ENCODE measurements at regions of chr1 and their contacts with region 1.

Region 1: DNA sequence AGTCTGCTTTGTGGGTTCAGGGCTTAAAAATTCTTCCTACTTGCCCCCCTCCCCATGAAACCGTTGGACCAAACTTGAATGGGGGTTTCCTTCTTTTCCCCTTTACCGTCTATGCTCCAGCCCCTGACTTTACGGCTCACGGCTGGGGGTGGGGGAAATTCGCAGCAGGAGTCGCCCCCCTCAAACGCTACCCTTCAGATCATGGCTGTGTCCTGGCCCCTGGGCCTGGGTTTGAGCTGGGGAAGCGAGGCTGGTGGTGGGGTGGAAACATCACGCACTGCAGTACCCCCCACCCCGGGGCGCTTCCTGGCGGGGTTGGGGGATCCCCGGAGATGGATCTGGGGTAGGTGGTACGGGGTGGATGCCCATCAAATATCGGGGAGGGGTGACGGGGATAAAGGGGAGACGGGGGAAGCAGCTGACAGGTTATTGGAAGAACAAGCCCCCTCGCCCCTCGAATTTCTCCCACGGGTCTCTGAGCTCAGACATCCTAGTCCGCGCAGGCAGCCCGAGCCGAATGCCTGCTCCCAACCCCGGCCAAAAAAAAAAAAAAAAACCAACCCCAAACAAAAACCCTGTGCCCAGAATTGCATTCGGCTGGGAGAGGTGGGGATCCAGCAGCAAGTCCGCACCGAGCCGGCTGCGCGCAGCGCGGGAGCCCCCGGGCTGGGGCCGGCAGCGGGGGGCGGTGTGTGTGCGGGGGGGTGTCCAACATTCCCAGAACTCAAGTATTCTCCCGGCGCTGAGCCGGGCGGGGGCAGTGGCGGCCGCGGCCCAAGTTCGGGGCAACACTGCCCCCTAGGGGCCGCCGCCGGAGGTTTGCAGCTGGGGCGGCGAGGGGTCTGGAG is 59.0 kb upstream of the ACOT11 start:
- DNase-seq: peak; percentile 38 to 83 (median 64)
- ATAC-seq: peak; percentile 57
- H3K4me3 ChIP-seq: peak overlapping the region; percentile 80
- H3K4me3 Mint-ChIP-seq: peak overlapping the region; percentile 87
- H3K27ac ChIP-seq: peak overlapping the region; percentile 58 to 78
- H3K27ac Mint-ChIP-seq: peak overlapping the region; percentile 62
- H3K4me1 ChIP-seq: peaks cover 52% of the 10 kb centered on the region
- H3K4me1 Mint-ChIP-seq: peaks cover 50% of the 10 kb centered on the region
- H3K27me3 ChIP-seq: no peaks in the 10 kb centered on the region
- H3K27me3 Mint-ChIP-seq: no peaks in the 10 kb centered on the region
- CTCF ChIP-seq: peak; percentile 99

Region 2: GRCh38 chr1:53889304-53890298 is 599.4 kb before region 1 on chr1 and contains the start of gene YIPF1:
- CTCF ChIA-PET with region 1: no interaction called
- POLR2A ChIA-PET with region 1: no interaction called
- intact Hi-C with region 1: loop called in 1 of 2 experiments (anchors 5 kb)
- DNase-seq: peak; percentile 69 to 92 (median 84)
- ATAC-seq: peak; percentile 99
- H3K4me3 ChIP-seq: peak within 1 kb of the TSS; percentile 98
- H3K4me3 Mint-ChIP-seq: peak within 1 kb of the TSS; percentile 94
- H3K27ac ChIP-seq: peak within 1 kb of the TSS; percentile 29 to 45
- H3K27ac Mint-ChIP-seq: peak within 1 kb of the TSS; percentile 93
- H3K4me1 ChIP-seq: peaks cover 18% of the 10 kb centered on the region
- H3K4me1 Mint-ChIP-seq: peaks cover 44% of the 10 kb centered on the region
- H3K27me3 ChIP-seq: no peaks in the 10 kb centered on the region
- H3K27me3 Mint-ChIP-seq: no peaks in the 10 kb centered on the region
- CTCF ChIP-seq: no peak
- total RNA-seq, gene YIPF1: 4.3 to 5.5 TPM

Region 3: DNA sequence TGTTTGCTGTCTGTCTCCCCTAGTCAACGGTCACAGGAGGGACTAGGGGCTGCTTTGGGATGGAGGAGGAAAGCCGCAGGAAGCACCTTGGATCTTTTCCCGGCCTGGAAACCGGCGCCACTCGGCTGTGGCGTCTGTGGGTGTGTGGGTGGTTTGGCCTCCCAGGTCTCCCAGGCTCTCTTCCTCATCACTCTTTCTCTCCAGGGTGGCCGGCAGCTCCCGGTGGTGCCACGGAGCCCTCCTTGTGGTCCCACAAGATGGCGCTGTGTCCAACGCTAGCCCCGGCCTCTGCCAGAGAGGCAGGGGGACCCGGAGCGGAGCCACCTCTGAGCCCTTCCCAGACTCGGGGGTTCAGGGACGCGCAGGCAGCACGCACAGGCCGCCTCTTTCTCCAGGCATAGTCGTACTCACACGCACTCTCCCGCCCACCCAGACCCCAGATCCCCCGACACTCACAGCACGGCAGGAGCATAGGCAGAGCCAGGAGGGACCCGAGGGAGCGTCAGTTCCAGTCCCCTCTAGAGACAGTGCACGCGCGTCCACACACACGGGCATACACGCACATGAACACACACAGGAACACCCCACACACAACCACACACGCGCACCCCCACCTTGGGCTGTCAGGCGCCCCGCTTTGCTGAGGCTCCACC is 367.4 kb before region 1 on chr1:
- CTCF ChIA-PET with region 1: interaction called, 14 read pairs
- POLR2A ChIA-PET with region 1: interaction called, 3 read pairs
- intact Hi-C with region 1: loop called (anchors 1 kb)
- DNase-seq: peak; percentile 51 to 79 (median 60)
- ATAC-seq: peak; percentile 85
- H3K4me3 ChIP-seq: peak overlapping the region; percentile 4
- H3K4me3 Mint-ChIP-seq: no peak overlapping the region
- H3K27ac ChIP-seq: no peak overlapping the region
- H3K27ac Mint-ChIP-seq: no peak overlapping the region
- H3K4me1 ChIP-seq: peaks cover 9% of the 10 kb centered on the region
- H3K4me1 Mint-ChIP-seq: no peaks in the 10 kb centered on the region
- H3K27me3 ChIP-seq: no peaks in the 10 kb centered on the region
- H3K27me3 Mint-ChIP-seq: peaks cover 3% of the 10 kb centered on the region
- CTCF ChIP-seq: peak; percentile 59

Region 4: DNA sequence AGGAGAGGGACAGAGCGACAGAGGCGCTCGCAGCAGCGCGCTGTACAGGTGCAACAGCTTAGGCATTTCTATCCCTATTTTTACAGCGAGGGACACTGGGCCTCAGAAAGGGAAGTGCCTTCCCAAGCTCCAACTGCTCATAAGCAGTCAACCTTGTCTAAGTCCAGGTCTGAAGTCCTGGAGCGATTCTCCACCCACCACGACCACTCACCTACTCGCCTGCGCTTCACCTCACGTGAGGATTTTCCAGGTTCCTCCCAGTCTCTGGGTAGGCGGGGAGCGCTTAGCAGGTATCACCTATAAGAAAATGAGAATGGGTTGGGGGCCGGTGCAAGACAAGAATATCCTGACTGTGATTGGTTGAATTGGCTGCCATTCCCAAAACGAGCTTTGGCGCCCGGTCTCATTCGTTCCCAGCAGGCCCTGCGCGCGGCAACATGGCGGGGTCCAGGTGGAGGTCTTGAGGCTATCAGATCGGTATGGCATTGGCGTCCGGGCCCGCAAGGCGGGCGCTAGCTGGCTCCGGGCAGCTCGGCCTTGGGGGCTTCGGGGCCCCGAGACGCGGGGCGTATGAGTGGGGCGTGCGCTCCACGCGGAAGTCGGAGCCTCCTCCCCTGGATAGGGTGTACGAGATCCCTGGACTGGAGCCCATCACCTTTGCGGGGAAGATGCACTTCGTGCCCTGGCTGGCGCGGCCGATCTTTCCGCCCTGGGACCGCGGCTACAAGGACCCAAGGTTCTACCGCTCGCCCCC is 289.1 kb before region 1 on chr1 and contains the starts of genes CYB5RL and MRPL37:
- CTCF ChIA-PET with region 1: interaction called, 15 read pairs
- POLR2A ChIA-PET with region 1: interaction called, 8 read pairs
- intact Hi-C with region 1: loop called (anchors 1 to 5 kb)
- DNase-seq: peak; percentile 78 to 96 (median 84)
- ATAC-seq: peak; percentile 98
- H3K4me3 ChIP-seq: peak within 1 kb of the TSS; percentile 96
- H3K4me3 Mint-ChIP-seq: peak within 1 kb of the TSS; percentile 92
- H3K27ac ChIP-seq: peak within 1 kb of the TSS; percentile 22 to 37
- H3K27ac Mint-ChIP-seq: peak within 1 kb of the TSS; percentile 87
- H3K4me1 ChIP-seq: peaks cover 25% of the 10 kb centered on the region
- H3K4me1 Mint-ChIP-seq: peaks cover 34% of the 10 kb centered on the region
- H3K27me3 ChIP-seq: no peaks in the 10 kb centered on the region
- H3K27me3 Mint-ChIP-seq: no peaks in the 10 kb centered on the region
- CTCF ChIP-seq: no peak
- total RNA-seq, gene CYB5RL: 2.0 to 2.1 TPM
- total RNA-seq, gene MRPL37: 24.0 to 24.4 TPM

Region 5: DNA sequence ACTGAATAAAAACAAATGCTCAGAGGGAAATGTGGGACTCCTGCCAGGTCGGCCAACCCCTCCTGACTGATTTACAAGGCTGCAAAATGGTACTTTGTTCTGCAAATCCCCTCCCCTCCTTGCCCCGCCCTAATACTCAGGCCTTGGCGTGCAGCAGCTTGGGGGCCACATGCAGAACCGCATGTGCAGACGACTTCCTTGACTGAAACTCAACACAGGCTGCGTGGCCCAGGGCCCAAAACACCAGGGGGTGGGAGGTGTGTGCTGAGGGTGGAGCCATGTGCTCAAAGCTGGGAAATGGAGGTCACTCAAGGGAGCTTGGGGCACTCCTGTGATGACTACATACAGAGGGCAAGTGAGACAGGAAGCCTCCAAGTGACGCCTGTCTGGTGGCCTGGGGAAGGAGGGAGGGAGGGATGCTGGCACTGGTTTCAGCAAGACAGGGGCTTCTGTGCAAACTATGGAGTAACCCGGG is 201.8 kb before region 1 on chr1:
- CTCF ChIA-PET with region 1: interaction called, 5 read pairs
- POLR2A ChIA-PET with region 1: interaction called, 9 read pairs
- intact Hi-C with region 1: loop called in 1 of 2 experiments (anchors 5 kb)
- DNase-seq: peak; percentile 32 to 81 (median 64)
- ATAC-seq: peak; percentile 76
- H3K4me3 ChIP-seq: no peak overlapping the region
- H3K4me3 Mint-ChIP-seq: peak overlapping the region; percentile 83
- H3K27ac ChIP-seq: peak overlapping the region; percentile 28 to 62
- H3K27ac Mint-ChIP-seq: peak overlapping the region; percentile 90
- H3K4me1 ChIP-seq: peaks cover 92% of the 10 kb centered on the region
- H3K4me1 Mint-ChIP-seq: peaks cover 91% of the 10 kb centered on the region
- H3K27me3 ChIP-seq: no peaks in the 10 kb centered on the region
- H3K27me3 Mint-ChIP-seq: no peaks in the 10 kb centered on the region
- CTCF ChIP-seq: no peak

Region 6: DNA sequence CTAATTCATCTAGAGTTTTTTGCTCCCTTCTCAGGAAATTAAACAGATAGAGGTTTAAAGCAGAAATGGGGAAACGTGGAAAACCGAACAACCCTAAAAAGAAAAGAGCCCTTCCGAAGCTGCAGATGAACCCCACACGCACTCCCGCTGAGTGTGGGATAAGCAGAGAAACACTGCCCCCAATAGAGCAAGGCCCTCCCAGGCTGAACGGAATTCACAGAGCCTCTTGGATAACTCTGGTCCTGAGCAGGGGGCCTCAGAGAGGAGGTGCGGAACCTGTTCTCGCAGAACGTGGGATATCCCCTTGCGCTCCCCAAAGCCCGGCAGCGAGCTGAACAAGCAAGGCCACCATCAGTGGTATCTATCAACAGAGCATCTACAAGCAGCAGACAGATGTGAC is 127.7 kb before region 1 on chr1:
- CTCF ChIA-PET with region 1: interaction called, 9 read pairs
- POLR2A ChIA-PET with region 1: no interaction called
- intact Hi-C with region 1: loop called (anchors 2 to 5 kb)
- DNase-seq: no peak
- ATAC-seq: no peak
- H3K4me3 ChIP-seq: no peak overlapping the region
- H3K4me3 Mint-ChIP-seq: no peak overlapping the region
- H3K27ac ChIP-seq: no peak overlapping the region
- H3K27ac Mint-ChIP-seq: peak overlapping the region; percentile 94
- H3K4me1 ChIP-seq: peaks cover 36% of the 10 kb centered on the region
- H3K4me1 Mint-ChIP-seq: peaks cover 97% of the 10 kb centered on the region
- H3K27me3 ChIP-seq: no peaks in the 10 kb centered on the region
- H3K27me3 Mint-ChIP-seq: no peaks in the 10 kb centered on the region
- CTCF ChIP-seq: no peak

Region 7: DNA sequence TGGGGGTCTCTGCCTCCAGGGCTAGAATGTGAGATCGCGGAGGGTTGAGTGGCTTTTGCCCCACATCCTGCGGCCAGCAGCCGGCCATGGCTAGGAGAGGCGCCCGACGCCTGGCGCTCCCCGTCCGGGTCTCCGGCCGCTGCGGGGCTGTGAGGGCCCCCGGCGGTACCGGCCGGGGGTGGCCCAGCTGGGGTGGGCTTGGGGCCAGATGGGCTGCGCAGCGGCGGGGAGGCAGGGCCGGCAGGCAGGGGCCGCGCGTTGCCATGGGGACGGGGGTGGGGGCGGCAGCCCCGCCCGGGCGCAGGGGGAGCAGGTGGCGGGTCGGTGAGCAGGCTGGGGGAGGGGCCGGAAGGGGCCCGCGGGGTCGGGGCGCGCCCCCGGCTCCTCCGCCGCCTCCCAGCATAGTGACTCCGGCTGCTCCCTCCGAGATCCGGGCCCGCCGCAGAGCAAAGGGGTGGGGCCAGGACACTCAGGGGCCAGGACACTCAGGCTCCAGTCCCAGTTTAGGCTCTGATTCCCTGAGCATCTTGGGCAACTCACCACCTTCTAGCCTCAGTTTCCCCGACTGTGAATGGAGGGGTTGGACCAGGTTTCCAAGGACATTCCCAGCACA is 14.3 kb before region 1 on chr1:
- CTCF ChIA-PET with region 1: interaction called, 13 read pairs
- POLR2A ChIA-PET with region 1: interaction called, 41 read pairs
- intact Hi-C with region 1: loop called in 1 of 2 experiments (anchors 1 kb)
- DNase-seq: peak in 8 of 14 experiments; percentile 24 to 67 (median 50)
- ATAC-seq: peak; percentile 56
- H3K4me3 ChIP-seq: peak overlapping the region; percentile 56
- H3K4me3 Mint-ChIP-seq: peak overlapping the region; percentile 91
- H3K27ac ChIP-seq: peak overlapping the region; percentile 70 to 79
- H3K27ac Mint-ChIP-seq: peak overlapping the region; percentile 88
- H3K4me1 ChIP-seq: peaks cover 48% of the 10 kb centered on the region
- H3K4me1 Mint-ChIP-seq: peaks cover 60% of the 10 kb centered on the region
- H3K27me3 ChIP-seq: no peaks in the 10 kb centered on the region
- H3K27me3 Mint-ChIP-seq: no peaks in the 10 kb centered on the region
- CTCF ChIP-seq: no peak